ENCODE measurements at regions of chr5 and their contacts with region 1.

Region 1: DNA sequence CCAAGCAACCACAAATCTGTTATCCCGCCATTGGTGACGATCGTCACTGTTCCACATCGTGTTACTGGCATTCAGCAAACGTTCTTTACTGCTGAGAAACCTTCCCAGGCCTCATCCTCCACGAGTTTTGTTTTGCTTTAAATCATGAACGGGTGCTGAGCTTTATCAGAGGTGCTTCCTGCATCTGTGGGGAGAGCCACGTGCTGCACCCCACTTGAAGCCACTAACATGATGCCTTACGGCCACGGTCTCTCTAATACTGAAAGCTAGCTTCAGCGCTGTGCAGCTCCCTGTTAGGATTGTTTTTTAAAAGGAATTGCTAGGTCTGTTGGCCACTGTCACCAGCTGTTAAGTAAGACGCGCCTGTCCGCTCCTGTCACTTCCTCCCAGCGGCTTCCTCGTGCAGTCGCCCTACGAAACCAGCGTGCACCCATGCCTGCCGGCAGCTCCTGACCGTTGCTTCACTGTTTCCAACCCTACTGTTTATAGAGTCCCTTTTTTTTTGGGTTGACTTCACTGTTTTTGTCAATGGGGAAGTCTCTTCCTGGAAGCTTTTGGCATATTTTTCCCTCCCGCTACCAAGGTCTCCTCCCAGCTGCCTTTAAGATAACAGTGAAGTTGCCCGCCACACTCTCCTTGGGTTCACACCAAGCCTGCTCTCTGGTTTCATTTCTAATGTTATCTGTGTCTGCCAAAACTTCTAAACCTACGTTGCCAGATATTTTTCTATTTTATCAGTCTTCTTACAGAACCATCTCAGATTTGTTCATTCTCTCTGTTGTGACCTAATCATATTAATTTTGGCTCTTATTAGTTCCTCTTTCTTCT is 20.3 kb downstream of the LPCAT1 start:
- H3K4me3 Mint-ChIP-seq: peak overlapping the region; percentile 68
- H3K27ac Mint-ChIP-seq: peak overlapping the region; percentile 97
- H3K4me1 Mint-ChIP-seq: peaks cover 91% of the 10 kb centered on the region
- H3K27me3 Mint-ChIP-seq: no peaks in the 10 kb centered on the region

Region 2: DNA sequence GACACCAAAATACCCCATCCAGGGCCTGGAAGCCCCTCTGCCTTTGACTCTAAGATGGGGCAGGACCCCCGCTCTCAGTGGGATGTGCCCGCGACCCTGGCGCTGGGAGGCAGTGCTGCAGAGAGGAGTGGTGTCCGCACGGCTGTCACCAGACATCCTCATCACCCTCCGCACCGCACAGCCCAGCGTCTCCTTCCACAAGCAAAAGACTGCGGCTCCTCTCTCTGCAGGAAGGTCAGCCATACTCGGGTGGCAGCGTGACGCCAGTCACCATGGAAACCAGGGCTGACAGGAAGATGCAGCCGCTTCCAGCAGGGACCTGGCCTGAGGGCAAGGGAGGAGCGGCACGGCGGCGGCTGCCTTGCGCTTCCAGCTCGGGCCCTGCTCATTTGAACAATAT is 41.1 kb before region 1 on chr5:
- intact Hi-C with region 1: no loop called
- H3K4me3 Mint-ChIP-seq: no peak overlapping the region
- H3K27ac Mint-ChIP-seq: no peak overlapping the region
- H3K4me1 Mint-ChIP-seq: no peaks in the 10 kb centered on the region
- H3K27me3 Mint-ChIP-seq: no peaks in the 10 kb centered on the region

Region 3: GRCh38 chr5:1479581-1480188 is 23.8 kb before region 1 on chr5:
- intact Hi-C with region 1: loop called (anchors 1 kb)
- H3K4me3 Mint-ChIP-seq: peak overlapping the region; percentile 67
- H3K27ac Mint-ChIP-seq: peak overlapping the region; percentile 92
- H3K4me1 Mint-ChIP-seq: peaks cover 76% of the 10 kb centered on the region
- H3K27me3 Mint-ChIP-seq: no peaks in the 10 kb centered on the region

Region 4: GRCh38 chr5:1516751-1517601 is 13.5 kb after region 1 on chr5:
- intact Hi-C with region 1: loop called (anchors 2 kb)
- H3K4me3 Mint-ChIP-seq: peak overlapping the region; percentile 26
- H3K27ac Mint-ChIP-seq: peak overlapping the region; percentile 57
- H3K4me1 Mint-ChIP-seq: peaks cover 74% of the 10 kb centered on the region
- H3K27me3 Mint-ChIP-seq: no peaks in the 10 kb centered on the region

Region 5: GRCh38 chr5:1523771-1524480 is 20.5 kb after region 1 on chr5 and contains the start of gene LPCAT1:
- intact Hi-C with region 1: loop called (anchors 2 kb)
- H3K4me3 Mint-ChIP-seq: peak within 1 kb of the TSS; percentile 83
- H3K27ac Mint-ChIP-seq: peak within 1 kb of the TSS; percentile 79
- H3K4me1 Mint-ChIP-seq: peaks cover 35% of the 10 kb centered on the region
- H3K27me3 Mint-ChIP-seq: peaks cover 2% of the 10 kb centered on the region

Region 6: GRCh38 chr5:1594357-1595106 is 91.1 kb after region 1 on chr5:
- intact Hi-C with region 1: loop called (anchors 10 kb)
- H3K4me3 Mint-ChIP-seq: peak overlapping the region; percentile 80
- H3K27ac Mint-ChIP-seq: peak overlapping the region; percentile 53
- H3K4me1 Mint-ChIP-seq: peaks cover 20% of the 10 kb centered on the region
- H3K27me3 Mint-ChIP-seq: peaks cover 48% of the 10 kb centered on the region

Measured in dendritic cell treated with granulocyte-macrophage colony-stimulating factor and Interleukin-4, amounts not matched to agents 40 ng/mL and 50 ng/mL, for 4 days (primary cell).